ENCODE measurements at regions of chr14 and their contacts with region 1.

Region 1: GRCh38 chr14:75044322-75044721 is 6.9 kb downstream of the MLH3 start:
- DNase-seq: no peak
- ATAC-seq: no peak
- H3K4me3 ChIP-seq: no peak overlapping the region
- H3K4me3 Mint-ChIP-seq: no peak overlapping the region
- H3K27ac ChIP-seq: no peak overlapping the region
- H3K27ac Mint-ChIP-seq: no peak overlapping the region
- H3K4me1 ChIP-seq: peaks cover under 1 to 4% of the 10 kb centered on the region in 2 experiments
- H3K4me1 Mint-ChIP-seq: peaks cover 44 to 50% (median 48%) of the 10 kb centered on the region in 3 donors
- H3K27me3 ChIP-seq: no peaks in the 10 kb centered on the region
- H3K27me3 Mint-ChIP-seq: no peaks in the 10 kb centered on the region

Region 2: GRCh38 chr14:75054421-75054820 is 10.1 kb after region 1 on chr14:
- CTCF ChIA-PET with region 1: no interaction called
- POLR2A ChIA-PET with region 1: interaction called in 1 of 2 experiments, 10 read pairs
- DNase-seq: no peak
- ATAC-seq: no peak
- H3K4me3 ChIP-seq: no peak overlapping the region
- H3K4me3 Mint-ChIP-seq: no peak overlapping the region
- H3K27ac ChIP-seq: no peak overlapping the region
- H3K27ac Mint-ChIP-seq: no peak overlapping the region
- H3K4me1 ChIP-seq: peaks cover under 1 to 13% of the 10 kb centered on the region in 2 experiments
- H3K4me1 Mint-ChIP-seq: peaks cover 17 to 28% (median 23%) of the 10 kb centered on the region in 3 donors
- H3K27me3 ChIP-seq: no peaks in the 10 kb centered on the region
- H3K27me3 Mint-ChIP-seq: no peaks in the 10 kb centered on the region